ENCODE measurements at regions of chr4 and their contacts with region 1.

Region 1: DNA sequence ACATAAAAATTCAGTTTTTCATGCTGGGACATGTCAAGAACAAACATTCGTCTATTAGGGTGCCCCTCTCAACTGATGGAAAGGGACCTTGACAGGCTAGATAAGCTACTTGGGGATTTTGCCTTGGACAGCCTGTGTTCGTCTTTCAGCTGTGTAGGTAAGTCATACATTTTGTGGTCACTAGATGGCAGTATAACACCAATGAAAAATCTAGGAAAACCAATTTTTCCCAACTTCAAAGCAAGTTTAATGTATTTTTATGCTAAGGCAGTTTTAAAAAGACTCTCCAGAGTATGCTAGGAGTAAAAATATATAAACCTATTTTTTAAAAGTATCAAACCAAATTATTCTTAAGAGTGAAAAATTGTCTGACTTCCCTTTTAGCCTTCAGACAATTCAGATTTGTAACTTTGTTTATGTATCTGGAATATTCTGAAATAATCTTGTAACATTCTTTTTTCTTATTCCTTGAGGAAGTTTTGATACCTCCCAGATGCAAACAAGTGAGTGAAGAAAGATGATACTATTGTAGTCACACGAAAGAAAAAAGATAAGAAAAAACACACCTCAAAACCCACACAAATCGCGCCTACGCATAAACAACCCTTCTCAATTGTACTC is 158.3 kb downstream of the CPE start:
- DNase-seq: peak; percentile 51
- ATAC-seq: peak; percentile 72; the same call in 1 of the 2 replicates
- H3K4me3 ChIP-seq: no peak overlapping the region
- H3K27ac ChIP-seq: no peak overlapping the region
- H3K4me1 ChIP-seq: no peaks in the 10 kb centered on the region
- H3K27me3 ChIP-seq: no peaks in the 10 kb centered on the region
- CTCF ChIP-seq: peak; percentile 44 to 77 (median 63)
- POLR2A ChIP-seq: no peak
- RAD21 ChIP-seq: peak; percentile 86

Region 2: DNA sequence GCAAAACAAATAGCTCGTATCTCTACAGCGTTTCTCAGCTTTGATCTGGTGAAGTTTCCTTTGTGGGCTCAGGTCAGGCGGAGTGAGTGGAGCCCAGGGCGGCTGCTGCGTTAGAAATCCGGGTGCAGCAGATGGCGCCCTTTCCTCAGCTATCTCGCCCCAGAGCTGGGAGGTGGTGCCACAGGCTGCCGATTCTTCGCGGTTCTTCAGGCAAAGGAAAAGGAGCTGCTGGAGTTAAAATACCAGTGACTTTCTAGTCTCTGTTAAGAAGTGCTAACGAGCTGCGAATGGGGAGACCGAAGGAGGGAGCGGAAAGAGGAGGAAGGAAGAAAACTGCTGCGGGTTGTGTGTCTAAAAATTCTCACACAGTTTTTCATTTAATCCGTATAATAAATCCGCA is 43.8 kb before region 1 on chr4:
- CTCF ChIA-PET with region 1: interaction called, 18 read pairs
- POLR2A ChIA-PET with region 1: no interaction called
- RAD21 ChIA-PET with region 1: interaction called, 5 to 8 read pairs
- intact Hi-C with region 1: loop called (anchors 2 kb)
- DNase-seq: peak; percentile 37
- ATAC-seq: peak; percentile 100
- H3K4me3 ChIP-seq: no peak overlapping the region
- H3K27ac ChIP-seq: no peak overlapping the region
- H3K4me1 ChIP-seq: peaks cover 0 to 3% of the 10 kb centered on the region in 2 experiments; a peak in 2 of 4 replicates
- H3K27me3 ChIP-seq: no peaks in the 10 kb centered on the region
- CTCF ChIP-seq: peak; percentile 64 to 82 (median 65); a peak in 5 of 6 replicates
- POLR2A ChIP-seq: no peak
- RAD21 ChIP-seq: peak; percentile 93

Region 3: GRCh38 chr4:165784672-165785071 is 247.5 kb after region 1 on chr4:
- CTCF ChIA-PET with region 1: interaction called, 3 read pairs
- POLR2A ChIA-PET with region 1: no interaction called
- RAD21 ChIA-PET with region 1: no interaction called
- intact Hi-C with region 1: loop called (anchors 5 kb)
- DNase-seq: no peak
- ATAC-seq: no peak
- H3K4me3 ChIP-seq: no peak overlapping the region
- H3K27ac ChIP-seq: no peak overlapping the region
- H3K4me1 ChIP-seq: no peaks in the 10 kb centered on the region
- H3K27me3 ChIP-seq: no peaks in the 10 kb centered on the region
- CTCF ChIP-seq: no peak
- POLR2A ChIP-seq: no peak
- RAD21 ChIP-seq: no peak

Region 4: GRCh38 chr4:166091912-166092510 is 554.9 kb after region 1 on chr4:
- CTCF ChIA-PET with region 1: interaction called, 18 read pairs
- POLR2A ChIA-PET with region 1: no interaction called
- RAD21 ChIA-PET with region 1: interaction called in 1 of 2 experiments, 3 read pairs
- intact Hi-C with region 1: loop called (anchors 1 kb)
- DNase-seq: peak; percentile 15
- ATAC-seq: peak; percentile 58; the same call in 1 of the 2 replicates
- H3K4me3 ChIP-seq: no peak overlapping the region
- H3K27ac ChIP-seq: no peak overlapping the region
- H3K4me1 ChIP-seq: no peaks in the 10 kb centered on the region
- H3K27me3 ChIP-seq: no peaks in the 10 kb centered on the region
- CTCF ChIP-seq: peak; percentile 61 to 77 (median 64); a peak in 5 of 6 replicates
- POLR2A ChIP-seq: no peak
- RAD21 ChIP-seq: peak; percentile 80

Region 5: DNA sequence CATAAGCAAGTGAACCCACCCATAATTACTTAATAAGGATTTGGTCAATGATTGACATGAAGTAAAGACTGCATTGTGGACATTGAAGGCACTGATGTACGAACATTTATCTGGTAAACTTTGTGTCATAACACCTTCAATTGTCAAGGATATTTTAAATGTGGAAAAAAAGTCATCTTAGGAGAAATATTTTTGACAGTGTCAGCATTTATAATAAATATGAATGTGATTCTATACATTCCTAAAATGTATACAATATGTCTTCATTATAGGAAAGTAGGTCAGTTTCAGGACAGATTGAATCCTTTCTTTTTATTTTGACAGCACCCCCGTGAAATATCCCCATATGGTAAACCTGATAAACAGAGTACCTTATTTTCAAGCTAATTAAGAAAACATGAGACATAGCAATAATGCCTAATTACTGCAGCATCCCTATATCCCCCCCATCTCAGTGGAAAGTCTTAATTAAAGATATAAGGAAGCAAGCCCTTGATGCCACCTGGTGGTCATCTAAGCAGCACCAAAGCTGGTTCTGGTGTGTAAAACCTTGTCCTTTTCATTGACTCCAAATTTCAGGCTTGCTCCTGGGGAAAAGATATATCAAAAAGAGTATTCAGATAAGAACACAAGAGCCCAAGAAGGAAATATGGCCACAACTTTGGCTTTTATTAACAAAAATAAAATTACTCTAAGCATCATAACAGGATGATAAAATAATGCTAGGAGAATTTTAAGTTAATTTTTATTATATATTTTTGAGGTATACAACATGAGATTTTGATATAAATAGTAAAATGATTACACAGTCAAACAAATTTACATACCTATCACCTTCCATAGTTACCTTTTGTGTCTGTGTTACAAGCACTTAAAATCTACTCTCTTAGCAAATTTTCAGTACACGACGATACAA is 715.6 kb after region 1 on chr4:
- CTCF ChIA-PET with region 1: no interaction called
- POLR2A ChIA-PET with region 1: no interaction called
- RAD21 ChIA-PET with region 1: no interaction called
- intact Hi-C with region 1: loop called (anchors 2 kb)
- DNase-seq: peak; percentile 37
- ATAC-seq: peak; percentile 77
- H3K4me3 ChIP-seq: no peak overlapping the region
- H3K27ac ChIP-seq: no peak overlapping the region
- H3K4me1 ChIP-seq: no peaks in the 10 kb centered on the region
- H3K27me3 ChIP-seq: no peaks in the 10 kb centered on the region
- CTCF ChIP-seq: peak; percentile 52 to 81 (median 72); a peak in 5 of 6 replicates
- POLR2A ChIP-seq: no peak
- RAD21 ChIP-seq: peak; percentile 59

Region 6: GRCh38 chr4:166594326-166594946 is 1057.3 kb after region 1 on chr4:
- CTCF ChIA-PET with region 1: no interaction called
- POLR2A ChIA-PET with region 1: no interaction called
- RAD21 ChIA-PET with region 1: no interaction called
- intact Hi-C with region 1: loop called (anchors 2 kb)
- DNase-seq: peak; percentile 50
- ATAC-seq: peak; percentile 100
- H3K4me3 ChIP-seq: no peak overlapping the region
- H3K27ac ChIP-seq: no peak overlapping the region
- H3K4me1 ChIP-seq: no peaks in the 10 kb centered on the region
- H3K27me3 ChIP-seq: no peaks in the 10 kb centered on the region
- CTCF ChIP-seq: peak; percentile 72 to 80 (median 77)
- POLR2A ChIP-seq: no peak
- RAD21 ChIP-seq: peak; percentile 94

Measured in HCT116 (cell line).